Aorta (tissue), 5 donors: ENCODE measurements at regions of chr11 and their contacts with region 1.

Region 1: DNA sequence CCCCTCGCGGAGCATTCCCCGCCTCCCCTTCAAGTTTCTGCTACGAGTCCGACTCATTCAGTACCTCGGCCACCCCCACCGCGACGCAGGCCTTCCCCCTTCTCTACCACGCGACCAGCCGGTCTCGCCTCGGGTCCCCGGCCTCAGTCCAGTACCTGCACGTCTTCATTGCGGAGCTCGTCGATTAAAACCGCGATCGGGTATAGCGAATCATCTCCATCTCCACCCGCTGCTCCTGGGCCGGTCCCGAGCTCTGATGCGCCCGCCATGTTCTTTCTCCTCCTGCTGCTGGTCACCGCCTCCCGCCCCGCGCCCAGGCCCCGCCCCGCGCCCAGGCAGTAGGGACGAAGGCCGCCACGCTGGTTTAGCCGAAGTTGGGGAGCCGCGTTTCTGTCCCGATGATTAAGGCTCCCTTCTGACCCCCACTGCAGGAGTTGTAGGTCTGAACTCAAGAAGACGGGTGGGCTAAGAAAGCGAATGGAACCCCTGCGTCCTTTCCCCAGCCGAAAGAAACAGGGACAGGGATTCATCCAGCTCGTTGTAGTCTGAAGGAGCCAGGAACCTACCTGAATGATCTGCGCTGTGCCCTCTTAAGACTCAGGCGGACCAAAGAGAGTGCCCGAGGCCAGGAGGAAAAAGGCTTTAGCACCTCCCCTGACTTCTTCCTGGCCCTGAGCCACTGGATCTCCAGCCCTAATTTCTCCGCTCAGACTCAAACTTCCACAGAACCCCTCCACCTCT is at the start of gene PPP2R1B:
- DNase-seq: peak; percentile 78 to 89
- ATAC-seq: peak; percentile 98
- H3K4me3 ChIP-seq: peak within 1 kb of the TSS; percentile 68 to 88
- H3K27ac ChIP-seq: peak within 1 kb of the TSS; percentile 16 to 91
- H3K4me1 ChIP-seq: no peaks in the 10 kb centered on the region
- H3K27me3 ChIP-seq: no peaks in the 10 kb centered on the region
- total RNA-seq, gene PPP2R1B: 21.9 to 27.2 TPM

Region 2: DNA sequence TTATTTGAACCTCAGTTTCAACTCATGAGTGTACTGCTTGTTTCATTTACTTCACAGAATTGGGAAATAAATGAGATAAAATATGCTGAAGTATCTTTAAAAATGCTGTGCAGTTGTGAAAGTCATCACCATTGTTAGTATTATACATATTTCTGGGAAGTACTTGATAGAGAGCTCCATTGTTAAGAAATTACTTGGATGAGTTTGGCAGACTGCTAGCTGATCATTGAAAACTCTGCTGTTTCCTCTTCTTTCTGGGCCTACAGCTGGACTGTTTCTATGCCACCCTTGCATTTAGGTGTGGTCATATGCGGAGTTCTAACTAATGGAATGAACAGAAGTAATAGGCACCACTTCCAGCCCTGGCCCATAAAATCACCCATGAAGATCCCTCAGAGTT is 154.0 kb before region 1 on chr11:
- intact Hi-C with region 1: no loop called
- DNase-seq: no peak
- ATAC-seq: no peak
- H3K4me3 ChIP-seq: no peak overlapping the region
- H3K27ac ChIP-seq: no peak overlapping the region
- H3K4me1 ChIP-seq: no peaks in the 10 kb centered on the region
- H3K27me3 ChIP-seq: no peaks in the 10 kb centered on the region

Region 3: DNA sequence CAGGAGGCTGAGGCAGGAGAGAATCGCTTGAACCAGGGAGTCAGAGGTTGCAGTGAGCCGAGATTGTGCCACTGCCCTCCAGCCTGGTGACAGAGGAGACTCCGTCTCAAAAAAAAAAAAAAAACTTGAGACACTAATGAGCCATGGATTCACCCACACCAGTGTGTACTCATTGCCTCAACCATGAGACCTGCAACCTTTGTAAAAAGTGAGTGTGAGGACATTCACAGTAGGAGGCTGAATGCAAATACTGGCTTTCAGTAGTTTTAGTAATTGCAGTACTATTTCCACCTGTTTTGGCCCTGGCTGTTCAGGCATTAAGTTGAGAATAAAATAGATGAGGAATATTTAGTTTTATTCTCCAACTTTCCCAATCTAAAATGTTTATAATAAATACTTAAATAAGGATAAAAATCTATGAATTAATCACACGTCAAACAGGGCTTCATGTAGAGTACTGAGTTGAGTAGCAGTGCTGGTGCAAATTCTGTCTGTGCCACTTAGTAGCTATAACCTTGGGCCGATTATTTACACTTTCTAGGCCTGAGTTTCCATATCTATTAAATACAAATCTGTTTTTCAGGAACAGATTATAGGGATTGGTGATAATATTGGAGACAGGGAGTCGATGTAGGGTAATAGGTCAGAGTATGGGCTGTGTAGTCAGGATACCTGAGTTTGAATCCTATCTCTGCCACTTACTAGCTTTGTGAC is 72.9 kb before region 1 on chr11:
- intact Hi-C with region 1: no loop called
- DNase-seq: no peak
- ATAC-seq: no peak
- H3K4me3 ChIP-seq: no peak overlapping the region
- H3K27ac ChIP-seq: no peak overlapping the region
- H3K4me1 ChIP-seq: no peaks in the 10 kb centered on the region
- H3K27me3 ChIP-seq: no peaks in the 10 kb centered on the region

Region 4: GRCh38 chr11:111723595-111723994 is 42.7 kb before region 1 on chr11:
- intact Hi-C with region 1: loop called in 1 of 2 experiments (anchors 5 kb)
- DNase-seq: no peak
- ATAC-seq: no peak
- H3K4me3 ChIP-seq: no peak overlapping the region
- H3K27ac ChIP-seq: no peak overlapping the region
- H3K4me1 ChIP-seq: peaks cover 0 to under 1% of the 10 kb centered on the region in 2 donors
- H3K27me3 ChIP-seq: no peaks in the 10 kb centered on the region

Region 5: DNA sequence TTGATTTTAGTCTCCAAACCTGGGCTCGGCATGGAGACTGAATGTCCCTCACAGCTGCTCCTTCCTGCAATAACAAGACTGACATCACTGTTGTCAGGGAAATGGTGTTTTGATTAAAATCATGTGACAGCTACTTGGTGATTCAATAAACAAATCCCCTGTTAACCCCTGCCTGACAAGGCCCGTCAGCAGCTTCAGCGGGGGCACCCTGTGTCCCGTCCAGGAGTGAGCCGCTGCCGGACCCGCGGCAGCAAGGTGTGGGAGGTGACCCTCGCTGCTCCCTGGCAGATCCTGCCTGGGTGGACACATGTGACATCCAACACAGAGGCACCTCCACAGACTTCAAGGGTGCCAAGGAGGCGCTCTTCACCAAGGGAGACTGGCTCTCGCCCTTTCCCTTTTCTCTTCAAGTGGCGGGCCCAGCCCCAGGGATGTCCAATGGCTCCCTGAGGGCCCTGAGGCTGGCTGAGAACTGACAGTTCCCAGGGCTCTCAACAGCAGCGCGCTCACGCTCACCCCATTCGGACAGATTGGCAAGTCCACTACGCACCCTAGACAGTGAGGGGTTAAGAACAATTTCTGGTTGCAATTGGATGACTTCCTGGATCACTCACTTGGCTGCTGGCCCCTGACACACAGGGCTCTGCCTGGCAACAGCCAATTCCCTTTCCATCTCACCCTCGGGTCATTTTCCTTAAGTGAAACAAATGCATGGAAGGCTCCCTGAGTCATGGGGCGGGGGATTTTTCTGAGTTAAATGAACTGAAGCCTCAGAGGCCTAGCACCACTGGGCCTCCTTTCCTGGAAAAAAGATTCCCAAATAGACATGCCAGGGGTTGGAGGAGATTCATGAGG is 30.8 kb before region 1 on chr11:
- intact Hi-C with region 1: loop called in 1 of 2 experiments (anchors 1 kb)
- DNase-seq: peak; percentile 87 to 91
- ATAC-seq: peak; percentile 87
- H3K4me3 ChIP-seq: no peak overlapping the region
- H3K27ac ChIP-seq: peak overlapping the region; percentile 85 to 99
- H3K4me1 ChIP-seq: peaks cover 0 to 3% of the 10 kb centered on the region in 2 donors
- H3K27me3 ChIP-seq: no peaks in the 10 kb centered on the region

Region 6: DNA sequence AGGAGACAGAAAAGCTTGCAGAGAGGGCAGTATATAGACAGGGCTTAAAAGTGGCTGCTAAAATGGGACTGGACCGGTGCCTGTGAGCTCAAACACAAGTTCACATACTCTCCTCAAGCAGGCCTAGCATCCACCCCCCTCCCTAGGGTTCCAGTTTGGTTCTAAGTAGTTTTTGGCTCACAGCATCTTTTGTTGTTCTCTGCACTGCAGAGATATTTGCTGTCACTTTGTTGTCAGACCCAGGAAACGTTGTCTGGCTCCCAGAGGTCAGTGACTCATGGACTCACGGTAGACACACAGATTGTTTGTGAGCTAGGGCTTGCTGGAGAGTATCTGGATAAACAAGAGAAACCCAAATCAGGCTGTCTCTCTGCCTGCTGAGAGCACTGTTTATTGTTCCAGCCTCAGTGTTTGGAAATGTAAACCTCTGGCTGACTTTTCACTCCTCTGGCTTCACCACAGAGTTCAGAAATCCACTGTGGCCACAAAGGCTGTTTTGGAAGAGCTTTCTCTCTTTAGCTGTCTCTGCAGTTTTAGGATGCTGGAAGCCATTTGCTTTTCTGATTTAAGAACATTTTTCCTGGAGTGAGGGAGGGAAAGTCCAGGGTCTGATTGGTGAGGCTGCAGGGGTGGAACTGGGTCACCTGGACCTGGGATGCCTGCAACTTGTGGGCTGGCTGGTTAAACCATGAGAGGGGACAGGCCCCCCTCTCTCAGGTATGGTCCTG is 798.1 kb after region 1 on chr11:
- intact Hi-C with region 1: no loop called
- DNase-seq: no peak
- ATAC-seq: peak; percentile 75
- H3K4me3 ChIP-seq: no peak overlapping the region
- H3K27ac ChIP-seq: peak overlapping the region; percentile 51 to 61
- H3K4me1 ChIP-seq: peaks cover 4 to 5% of the 10 kb centered on the region in 2 donors
- H3K27me3 ChIP-seq: no peaks in the 10 kb centered on the region